HepG2 (cell line): ENCODE measurements at regions of chr10 and their contacts with region 1.

Region 1: DNA sequence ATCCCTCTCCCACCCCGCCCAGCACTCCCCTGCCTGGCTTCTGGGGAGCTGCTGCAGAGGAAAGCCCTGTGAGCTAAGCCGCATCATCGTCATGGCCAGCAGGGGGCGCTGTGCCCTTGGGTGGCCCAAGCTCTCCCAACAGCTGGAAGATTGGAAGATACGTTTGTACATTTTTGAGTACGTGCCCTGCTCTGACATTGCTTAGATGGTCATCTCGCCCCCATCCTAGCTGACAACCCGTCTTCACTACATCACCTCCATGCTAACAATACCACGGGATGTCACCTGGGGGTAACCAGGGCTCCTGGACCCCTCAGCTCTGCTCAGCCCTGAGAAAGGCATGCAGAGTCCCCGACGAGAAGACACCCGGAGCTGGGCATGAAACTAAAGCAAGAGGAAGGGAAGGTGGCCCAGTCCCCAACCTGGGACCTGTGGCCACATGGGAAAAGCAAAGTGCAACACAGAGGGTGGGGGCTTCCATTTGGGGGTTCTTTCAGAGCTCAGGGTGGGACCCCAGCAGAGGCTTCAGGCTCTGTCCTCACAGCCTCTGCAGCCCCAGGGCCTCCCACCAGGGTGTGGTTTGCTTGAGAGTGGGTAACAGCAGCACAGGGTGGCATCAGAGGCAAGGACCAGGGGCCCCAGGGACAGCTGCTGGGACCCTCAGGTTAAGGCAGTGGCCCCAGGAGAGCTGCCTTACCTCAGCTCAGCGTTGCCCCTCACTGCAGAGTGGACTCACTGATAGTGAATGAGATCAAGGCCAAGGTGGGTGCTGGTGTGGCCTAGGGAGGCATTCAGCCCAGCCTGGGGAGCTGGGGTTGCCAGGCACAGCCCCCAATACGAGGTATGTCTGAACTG is 136.7 kb downstream of the PTPN20 start:
- DNase-seq: peak; percentile 41
- ATAC-seq: peak; percentile 88
- H3K4me3 ChIP-seq: no peak overlapping the region
- H3K27ac ChIP-seq: no peak overlapping the region
- H3K4me1 ChIP-seq: no peaks in the 10 kb centered on the region
- H3K27me3 ChIP-seq: peaks cover 2 to 7% of the 10 kb centered on the region in 2 experiments; a peak in 1 of 5 replicates
- CTCF ChIP-seq: peak; percentile 88
- EP300 ChIP-seq: no peak
- POLR2A ChIP-seq: no peak
- RAD21 ChIP-seq: peak; percentile 70

Region 2: DNA sequence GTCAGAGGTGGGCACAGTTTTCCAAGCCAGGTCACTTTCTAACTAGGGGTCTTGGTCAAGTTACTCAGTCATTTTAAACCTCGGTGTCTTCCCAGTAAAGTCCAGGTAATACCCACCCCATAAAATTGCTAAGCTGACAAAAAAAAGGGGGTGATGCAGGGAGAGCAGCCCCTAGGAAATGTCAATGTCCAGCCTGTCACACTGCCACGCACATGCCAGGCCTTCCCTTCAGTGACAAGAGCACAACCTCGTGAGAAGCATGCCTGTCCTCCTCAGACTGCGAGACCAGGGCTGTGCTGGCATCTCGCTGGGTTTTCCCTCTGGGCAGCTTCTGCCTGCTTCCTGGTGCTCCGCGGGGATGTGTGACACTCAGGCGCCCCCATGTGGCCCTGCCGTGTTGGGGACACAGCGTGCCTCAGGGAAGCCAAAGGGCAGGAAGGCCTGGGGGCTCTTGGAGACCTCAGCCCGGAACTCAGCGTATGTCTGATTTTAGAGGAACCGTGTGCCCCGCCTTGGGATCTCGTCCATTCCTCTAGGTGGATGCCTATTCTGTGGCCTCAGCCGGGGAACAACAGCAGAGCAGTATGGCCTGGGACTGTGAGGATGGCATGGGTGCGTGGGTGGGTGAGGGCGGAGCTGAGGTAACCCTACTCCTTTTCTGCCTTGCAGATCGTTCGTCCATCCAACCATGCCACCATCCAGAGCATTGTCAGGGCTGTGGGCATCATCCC is 264.2 kb after region 1 on chr10:
- CTCF ChIA-PET with region 1: interaction called, 23 read pairs
- POLR2A ChIA-PET with region 1: no interaction called
- in situ Hi-C with region 1: no loop called
- intact Hi-C with region 1: loop called (anchors 5 kb)
- DNase-seq: peak; percentile 48
- ATAC-seq: peak; percentile 96
- H3K4me3 ChIP-seq: no peak overlapping the region
- H3K27ac ChIP-seq: no peak overlapping the region
- H3K4me1 ChIP-seq: no peaks in the 10 kb centered on the region
- H3K27me3 ChIP-seq: peaks cover 4 to 15% of the 10 kb centered on the region in 2 experiments; a peak in 3 of 5 replicates
- CTCF ChIP-seq: peak; percentile 95
- EP300 ChIP-seq: no peak
- POLR2A ChIP-seq: no peak
- RAD21 ChIP-seq: peak; percentile 90